ENCODE measurements at regions of chr22 and their contacts with region 1.

Region 1: DNA sequence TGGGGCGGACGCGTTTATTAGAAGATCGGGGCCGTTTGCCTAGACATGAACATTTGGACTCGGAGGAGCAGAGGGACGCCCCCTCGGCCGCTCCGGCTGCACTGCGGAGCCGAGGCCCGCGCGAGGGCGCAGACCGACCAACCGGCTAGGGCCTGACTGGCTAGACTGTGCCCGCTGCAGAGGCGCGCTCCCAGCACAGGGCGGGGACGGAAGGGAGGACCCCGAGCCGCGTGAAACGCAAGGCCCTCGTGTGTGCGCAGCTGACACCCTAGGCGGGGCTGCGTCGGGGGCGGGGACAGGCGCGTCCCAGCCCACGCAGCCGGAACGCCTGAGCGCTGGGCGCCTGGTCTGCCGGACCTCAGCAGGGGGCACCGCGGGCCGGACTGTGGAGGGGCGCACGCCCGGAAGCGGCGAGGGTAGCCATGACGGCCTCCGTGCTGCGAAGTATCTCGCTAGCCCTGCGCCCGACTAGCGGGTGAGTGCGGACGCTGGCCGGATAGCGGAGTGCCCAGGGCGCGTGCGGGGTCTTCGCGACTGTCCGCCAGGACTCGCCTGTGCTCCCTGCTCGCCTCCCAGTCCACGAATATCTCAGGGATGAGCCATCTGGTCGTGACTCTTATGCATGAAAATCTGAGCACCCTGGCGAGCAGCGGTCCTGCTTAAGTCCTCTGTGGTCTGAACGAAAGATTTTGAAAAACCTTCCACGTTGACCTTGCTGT is at the start of gene MRPL40:
- DNase-seq: peak; percentile 86 to 97 (median 94)
- H3K4me3 ChIP-seq: peak within 1 kb of the TSS; percentile 64 to 97 (median 90)
- H3K27ac ChIP-seq: peak within 1 kb of the TSS; percentile 79 to 99 (median 97)
- H3K27me3 ChIP-seq: no peaks in the 10 kb centered on the region
- CTCF ChIP-seq: peak in 36 of 56 donors; percentile 1 to 56 (median 31)
- total RNA-seq, gene MRPL40: 13.6 to 32.2 (median 22.6) TPM

Region 2: DNA sequence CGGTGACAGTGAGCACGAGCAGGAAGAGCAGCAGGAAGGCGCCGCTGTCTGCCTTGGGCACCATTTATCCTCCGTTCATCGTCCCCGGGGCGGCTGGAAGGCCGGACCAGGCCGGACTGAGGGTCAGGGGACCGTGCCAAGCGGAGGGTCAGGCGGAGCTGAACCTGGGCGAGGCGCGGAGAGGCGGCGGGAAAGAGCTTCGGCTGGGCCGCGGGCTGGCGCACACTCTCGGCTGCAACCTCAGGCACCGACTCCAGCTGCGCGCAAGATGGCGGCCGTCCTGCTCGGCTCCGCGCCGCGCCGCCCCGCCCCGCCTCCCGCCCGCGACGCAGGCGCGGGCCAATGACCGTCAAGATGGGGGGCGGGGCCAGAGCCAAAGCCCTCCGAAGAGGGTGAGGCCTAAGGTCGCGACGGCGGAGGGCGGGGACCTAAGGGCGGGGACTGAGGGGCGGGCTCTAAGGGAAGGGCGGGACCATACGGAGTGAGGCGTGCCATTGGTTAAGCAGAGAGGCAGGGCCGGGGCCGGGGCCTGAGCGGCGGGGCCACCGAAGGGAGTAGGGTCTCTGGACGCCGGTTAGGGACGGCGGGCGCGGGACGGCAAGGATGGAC is 310.0 kb before region 1 on chr22 and contains the start of gene DGCR2:
- intact Hi-C with region 1: loop called in 1 of 2 experiments (anchors 5 kb)
- DNase-seq: peak; percentile 91 to 98 (median 96)
- H3K4me3 ChIP-seq: peak within 1 kb of the TSS; percentile 68 to 100 (median 93)
- H3K27ac ChIP-seq: peak within 1 kb of the TSS in 56 of 59 donors; percentile 45 to 96 (median 88)
- H3K27me3 ChIP-seq: no peaks in the 10 kb centered on the region
- CTCF ChIP-seq: peak in 13 of 56 donors; percentile 5 to 31 (median 12)
- total RNA-seq, gene DGCR2: 71.8 to 123 (median 94.1) TPM

Region 3: GRCh38 chr22:19291580-19292457 is 140.5 kb before region 1 on chr22 and contains the start of gene CLTCL1:
- intact Hi-C with region 1: loop called (anchors 5 kb)
- DNase-seq: peak; percentile 54 to 84 (median 72)
- H3K4me3 ChIP-seq: peak within 1 kb of the TSS; percentile 48 to 97 (median 82)
- H3K27ac ChIP-seq: peak within 1 kb of the TSS in 38 of 59 donors; percentile 6 to 84 (median 55)
- H3K27me3 ChIP-seq: peaks cover 0 to 7% (median 0%) of the 10 kb centered on the region in 45 donors
- CTCF ChIP-seq: peak in 4 of 56 donors; percentile 10 to 21 (median 16)
- total RNA-seq, gene CLTCL1: 3.5 to 16.2 (median 9.0) TPM

Region 4: GRCh38 chr22:19398206-19398605 is 34.1 kb before region 1 on chr22:
- intact Hi-C with region 1: no loop called
- DNase-seq: no peak
- H3K4me3 ChIP-seq: no peak overlapping the region
- H3K27ac ChIP-seq: peak overlapping the region in 12 of 59 donors; percentile 1 to 59 (median 40)
- H3K27me3 ChIP-seq: no peaks in the 10 kb centered on the region
- CTCF ChIP-seq: no peak

Region 5: GRCh38 chr22:19469421-19469820 is 37.1 kb after region 1 on chr22:
- intact Hi-C with region 1: loop called in 1 of 2 experiments (anchors 2 kb)
- DNase-seq: peak in 1 of 10 donors; percentile 80
- H3K4me3 ChIP-seq: no peak overlapping the region
- H3K27ac ChIP-seq: peak overlapping the region in 1 of 59 donors; percentile 76
- H3K27me3 ChIP-seq: no peaks in the 10 kb centered on the region
- CTCF ChIP-seq: no peak

Region 6: GRCh38 chr22:19629720-19630419 is 197.6 kb after region 1 on chr22:
- intact Hi-C with region 1: loop called in 1 of 2 experiments (anchors 5 kb)
- DNase-seq: peak; percentile 63 to 86 (median 77)
- H3K4me3 ChIP-seq: peak overlapping the region in 3 of 59 donors; percentile 5 to 27 (median 15)
- H3K27ac ChIP-seq: peak overlapping the region in 2 of 59 donors; percentile 22 to 37
- H3K27me3 ChIP-seq: peaks cover 0 to 7% (median 0%) of the 10 kb centered on the region in 45 donors
- CTCF ChIP-seq: peak; percentile 53 to 98 (median 90)

Measured in dorsolateral prefrontal cortex (tissue), 120 donors.